ENCODE measurements at regions of chr20 and their contacts with region 1.

Region 1: GRCh38 chr20:19889011-19889953 is 127.9 kb upstream of the NAA20 start:
- DNase-seq: peak; percentile 59 to 79
- ATAC-seq: peak; percentile 77
- H3K4me3 ChIP-seq: peak overlapping the region; percentile 1 to 2
- H3K27ac ChIP-seq: peak overlapping the region; percentile 93 to 96
- H3K4me1 ChIP-seq: peaks cover 0 to 11% of the 10 kb centered on the region in 2 donors
- H3K27me3 ChIP-seq: no peaks in the 10 kb centered on the region

Region 2: GRCh38 chr20:19802492-19803158 is 86.7 kb before region 1 on chr20:
- intact Hi-C with region 1: no loop called
- DNase-seq: no peak
- ATAC-seq: peak; percentile 33
- H3K4me3 ChIP-seq: no peak overlapping the region
- H3K27ac ChIP-seq: no peak overlapping the region
- H3K4me1 ChIP-seq: no peaks in the 10 kb centered on the region
- H3K27me3 ChIP-seq: no peaks in the 10 kb centered on the region

Region 3: DNA sequence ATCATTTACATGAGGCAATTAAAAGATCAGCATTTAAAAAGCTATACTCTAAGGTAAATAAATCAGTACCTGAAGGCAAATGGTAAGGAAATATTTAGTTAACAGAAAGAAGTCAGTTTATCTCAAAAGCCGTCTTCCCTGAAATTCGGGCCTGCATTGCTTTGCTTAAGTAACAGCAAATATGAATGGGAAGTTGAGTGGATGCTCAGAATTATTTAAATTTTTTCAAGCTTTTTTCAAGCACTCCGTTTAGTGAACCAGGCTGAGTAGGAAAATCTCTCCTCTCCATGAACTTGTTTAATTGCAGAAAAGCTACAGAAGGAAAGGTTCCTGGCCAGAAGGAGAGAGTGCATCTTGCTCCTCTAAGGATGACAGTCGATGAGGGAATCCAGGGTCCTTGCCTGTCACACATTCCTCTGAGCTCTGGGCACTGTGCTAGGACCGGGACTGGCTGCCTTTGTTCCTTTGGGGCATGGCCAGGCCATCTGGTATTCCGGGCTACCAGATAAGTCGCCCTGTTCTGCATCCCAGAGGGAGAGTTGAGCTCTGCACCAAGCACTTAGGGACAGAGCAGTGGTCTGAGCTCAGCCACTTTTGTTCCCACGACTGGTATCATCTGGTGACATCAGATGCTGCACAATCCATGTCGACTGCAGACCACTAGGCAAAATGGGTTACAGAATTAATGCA is 53.6 kb before region 1 on chr20:
- intact Hi-C with region 1: no loop called
- DNase-seq: no peak
- ATAC-seq: no peak
- H3K4me3 ChIP-seq: no peak overlapping the region
- H3K27ac ChIP-seq: peak overlapping the region in 1 of 2 donors; percentile 10
- H3K4me1 ChIP-seq: peaks cover 2% of the 10 kb centered on the region in 2 donors
- H3K27me3 ChIP-seq: no peaks in the 10 kb centered on the region

Region 4: GRCh38 chr20:19934792-19935491 is 45.7 kb after region 1 on chr20:
- intact Hi-C with region 1: loop called in 1 of 2 experiments (anchors 5 kb)
- DNase-seq: peak in 1 of 2 donors; percentile 81
- ATAC-seq: peak; percentile 47
- H3K4me3 ChIP-seq: no peak overlapping the region
- H3K27ac ChIP-seq: no peak overlapping the region
- H3K4me1 ChIP-seq: no peaks in the 10 kb centered on the region
- H3K27me3 ChIP-seq: no peaks in the 10 kb centered on the region

Region 5: DNA sequence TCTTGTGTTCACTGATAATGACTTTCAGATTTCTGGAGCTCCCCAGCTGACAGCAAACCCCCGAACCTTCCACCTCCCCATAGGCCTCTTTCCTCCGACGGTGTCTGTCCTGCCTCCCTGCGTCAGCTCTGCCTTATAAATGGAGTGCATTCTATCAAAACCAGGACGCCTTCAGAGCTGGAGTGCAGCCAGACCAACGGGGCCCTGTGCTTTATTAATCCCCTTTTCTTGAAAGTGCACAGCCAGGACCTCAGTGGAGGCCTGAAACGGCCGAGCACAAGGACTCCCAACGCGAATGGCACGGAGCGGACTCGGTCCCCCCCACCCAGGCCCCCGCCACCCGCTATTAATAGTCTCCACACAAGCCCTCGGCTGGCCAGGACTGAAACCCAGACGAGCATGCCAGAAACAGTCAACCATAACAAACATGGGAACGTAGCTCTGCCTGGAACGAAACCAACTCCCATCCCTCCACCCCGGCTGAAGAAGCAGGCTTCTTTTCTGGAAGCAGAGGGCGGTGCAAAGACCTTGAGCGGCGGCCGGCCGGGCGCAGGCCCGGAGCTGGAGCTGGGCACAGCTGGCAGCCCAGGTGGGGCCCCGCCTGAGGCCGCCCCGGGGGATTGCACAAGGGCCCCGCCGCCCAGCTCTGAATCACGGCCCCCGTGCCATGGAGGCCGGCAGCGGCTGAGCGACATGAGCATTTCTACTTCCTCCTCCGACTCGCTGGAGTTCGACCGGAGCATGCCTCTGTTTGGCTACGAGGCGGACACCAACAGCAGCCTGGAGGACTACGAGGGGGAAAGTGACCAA is 85.5 kb after region 1 on chr20:
- intact Hi-C with region 1: loop called (anchors 5 kb)
- DNase-seq: peak; percentile 94 to 95
- ATAC-seq: peak; percentile 92
- H3K4me3 ChIP-seq: peak overlapping the region; percentile 35 to 79
- H3K27ac ChIP-seq: peak overlapping the region; percentile 96 to 97
- H3K4me1 ChIP-seq: peaks cover 4 to 5% of the 10 kb centered on the region in 2 donors
- H3K27me3 ChIP-seq: no peaks in the 10 kb centered on the region

Region 6: DNA sequence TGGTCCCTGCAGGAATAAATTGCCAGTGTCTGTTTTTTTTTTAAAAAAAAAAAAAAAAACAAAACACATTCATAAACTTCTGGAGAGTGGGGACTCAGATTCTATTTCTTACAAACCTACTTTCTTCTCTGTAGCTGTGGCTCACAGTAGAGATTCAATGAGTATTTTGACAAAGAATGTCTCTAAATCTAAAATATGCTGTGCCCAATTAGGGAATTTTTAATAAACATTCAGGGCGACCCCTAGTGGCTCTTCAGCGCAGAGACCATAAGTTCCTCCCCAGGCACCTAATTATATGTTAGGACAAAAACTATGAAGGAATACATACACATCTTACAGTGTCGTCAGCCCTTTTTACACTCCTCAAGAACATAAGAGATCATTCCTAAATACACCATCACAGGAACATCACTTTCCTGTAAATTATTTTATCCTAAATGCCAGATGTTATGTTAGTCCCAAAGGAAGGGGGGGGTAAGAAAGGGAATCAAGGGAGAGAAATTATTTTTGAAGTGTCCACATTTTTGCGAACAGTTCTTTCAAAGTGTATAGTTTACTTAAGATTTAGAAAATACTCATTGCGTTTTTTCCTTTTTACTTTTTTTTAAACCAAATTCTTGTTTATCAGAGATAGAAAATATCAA is 106.1 kb after region 1 on chr20:
- intact Hi-C with region 1: loop called (anchors 5 kb)
- DNase-seq: no peak
- ATAC-seq: peak; percentile 75
- H3K4me3 ChIP-seq: no peak overlapping the region
- H3K27ac ChIP-seq: no peak overlapping the region
- H3K4me1 ChIP-seq: peaks cover 1 to 5% of the 10 kb centered on the region in 2 donors
- H3K27me3 ChIP-seq: no peaks in the 10 kb centered on the region

Measured in aorta (tissue), 5 donors.